ENCODE measurements at regions of chr12 and their contacts with region 1.

Region 1: DNA sequence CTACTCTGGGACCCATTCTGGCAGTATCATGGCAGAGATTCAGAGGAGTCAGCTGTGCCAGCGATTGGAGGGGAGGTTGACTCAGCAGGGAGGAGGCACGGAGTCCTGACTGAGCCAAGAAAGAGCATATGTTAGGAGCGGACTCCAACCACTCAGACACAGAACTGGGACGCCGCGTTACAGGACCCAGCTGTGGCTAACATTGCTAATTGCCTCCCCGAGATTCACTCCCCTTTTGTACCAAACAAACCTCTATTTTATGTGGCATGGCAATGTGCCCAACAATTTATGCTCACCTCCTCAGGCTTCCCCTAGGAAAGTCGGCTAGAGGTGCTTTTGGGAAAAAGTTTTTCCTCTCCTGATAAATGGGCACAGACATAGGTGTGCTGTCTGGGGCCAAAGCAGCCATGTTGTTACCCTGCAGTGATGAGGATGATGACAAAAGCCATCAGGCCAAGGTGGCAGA is 15.2 kb upstream of the CLIP1 start:
- DNase-seq: no peak
- H3K4me3 ChIP-seq: no peak overlapping the region
- CTCF ChIP-seq: no peak

Region 2: GRCh38 chr12:122336015-122336946 is 101.4 kb before region 1 on chr12:
- in situ Hi-C with region 1: loop called (anchors 5 kb)
- DNase-seq: no peak
- H3K4me3 ChIP-seq: no peak overlapping the region
- CTCF ChIP-seq: peak; percentile 71

Region 3: DNA sequence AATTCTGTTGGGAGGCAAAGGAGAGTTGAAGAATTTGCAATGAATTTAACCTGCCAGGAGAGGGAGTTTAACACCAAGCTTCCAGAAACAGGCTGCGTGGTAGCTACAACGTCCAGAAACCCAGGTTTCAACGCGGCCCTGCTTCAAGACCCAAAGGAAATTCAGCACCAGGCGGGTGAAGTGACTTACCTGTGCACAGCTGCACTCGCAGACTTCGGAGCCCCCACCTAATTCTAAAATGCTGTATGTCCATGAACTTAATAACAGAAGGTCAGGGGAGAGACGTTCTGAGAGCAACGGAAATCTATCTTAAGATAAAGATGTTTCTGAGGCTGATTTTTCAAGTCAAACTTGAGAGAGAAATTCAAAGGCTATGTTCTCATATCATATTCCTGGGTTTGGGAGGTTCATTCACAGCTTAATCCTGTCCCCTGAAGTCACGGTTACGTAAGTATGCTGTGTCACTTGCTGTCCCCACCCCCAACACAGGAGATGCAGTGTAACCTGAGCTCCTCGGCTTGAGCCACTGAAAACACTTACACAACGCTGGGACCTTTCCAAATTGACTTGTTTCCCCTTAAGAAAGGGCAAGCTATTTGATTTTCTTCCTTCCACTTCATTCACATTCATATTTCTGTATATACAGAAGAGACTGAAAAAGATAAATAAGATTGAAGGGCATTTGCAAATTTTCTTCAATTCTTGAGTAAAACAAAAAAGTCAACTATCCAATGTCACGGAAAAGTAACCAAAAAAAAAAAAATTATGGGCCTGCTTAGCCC is 37.9 kb before region 1 on chr12:
- in situ Hi-C with region 1: loop called (anchors 5 kb)
- DNase-seq: peak; percentile 82
- H3K4me3 ChIP-seq: no peak overlapping the region
- CTCF ChIP-seq: peak; percentile 70

Region 4: GRCh38 chr12:122471324-122472226 is 33.9 kb after region 1 on chr12:
- in situ Hi-C with region 1: no loop called
- DNase-seq: peak; percentile 72
- H3K4me3 ChIP-seq: no peak overlapping the region
- CTCF ChIP-seq: peak; percentile 76

Region 5: DNA sequence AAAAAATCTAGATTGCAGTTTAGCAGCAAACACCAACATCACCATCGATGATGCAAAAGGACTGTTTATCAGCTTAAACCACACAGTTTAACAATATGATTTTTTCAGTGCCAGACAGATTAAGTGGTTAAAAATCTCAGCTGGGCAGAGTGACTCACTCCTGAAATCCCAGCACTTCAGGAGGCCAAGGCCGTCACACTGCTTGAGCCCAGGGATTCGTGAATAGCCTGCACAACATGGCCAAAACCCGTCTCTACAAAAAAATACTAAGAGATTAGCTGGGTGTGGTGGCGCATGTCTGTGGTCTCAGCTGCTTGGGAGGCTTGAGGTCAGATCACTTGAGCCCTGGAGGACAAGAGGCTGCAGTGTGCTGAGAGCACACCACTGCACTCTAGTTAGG is 80.2 kb after region 1 on chr12:
- in situ Hi-C with region 1: no loop called
- DNase-seq: peak; percentile 96
- H3K4me3 ChIP-seq: no peak overlapping the region
- CTCF ChIP-seq: no peak

Region 6: GRCh38 chr12:122614839-122615238 is 177.2 kb after region 1 on chr12:
- in situ Hi-C with region 1: no loop called
- DNase-seq: no peak
- H3K4me3 ChIP-seq: no peak overlapping the region
- CTCF ChIP-seq: no peak

Measured in astrocyte of the cerebellum (primary cell).